Activated naive CD4-positive, alpha-beta T cell treated with anti-CD3 and anti-CD28 coated beads, Interleukin-2, amount 10 ng/mL, durations not matched to agents 7 days and 5 days (primary cell): ENCODE measurements at regions of chr20 and their contacts with region 1.

Region 1: GRCh38 chr20:32945710-32946221 is 58.5 kb downstream of the SUN5 start:
- DNase-seq: no peak
- H3K4me3 Mint-ChIP-seq: no peak overlapping the region
- H3K27ac Mint-ChIP-seq: peak overlapping the region; percentile 66
- H3K4me1 Mint-ChIP-seq: peaks cover 37% of the 10 kb centered on the region
- H3K27me3 Mint-ChIP-seq: no peaks in the 10 kb centered on the region

Region 2: DNA sequence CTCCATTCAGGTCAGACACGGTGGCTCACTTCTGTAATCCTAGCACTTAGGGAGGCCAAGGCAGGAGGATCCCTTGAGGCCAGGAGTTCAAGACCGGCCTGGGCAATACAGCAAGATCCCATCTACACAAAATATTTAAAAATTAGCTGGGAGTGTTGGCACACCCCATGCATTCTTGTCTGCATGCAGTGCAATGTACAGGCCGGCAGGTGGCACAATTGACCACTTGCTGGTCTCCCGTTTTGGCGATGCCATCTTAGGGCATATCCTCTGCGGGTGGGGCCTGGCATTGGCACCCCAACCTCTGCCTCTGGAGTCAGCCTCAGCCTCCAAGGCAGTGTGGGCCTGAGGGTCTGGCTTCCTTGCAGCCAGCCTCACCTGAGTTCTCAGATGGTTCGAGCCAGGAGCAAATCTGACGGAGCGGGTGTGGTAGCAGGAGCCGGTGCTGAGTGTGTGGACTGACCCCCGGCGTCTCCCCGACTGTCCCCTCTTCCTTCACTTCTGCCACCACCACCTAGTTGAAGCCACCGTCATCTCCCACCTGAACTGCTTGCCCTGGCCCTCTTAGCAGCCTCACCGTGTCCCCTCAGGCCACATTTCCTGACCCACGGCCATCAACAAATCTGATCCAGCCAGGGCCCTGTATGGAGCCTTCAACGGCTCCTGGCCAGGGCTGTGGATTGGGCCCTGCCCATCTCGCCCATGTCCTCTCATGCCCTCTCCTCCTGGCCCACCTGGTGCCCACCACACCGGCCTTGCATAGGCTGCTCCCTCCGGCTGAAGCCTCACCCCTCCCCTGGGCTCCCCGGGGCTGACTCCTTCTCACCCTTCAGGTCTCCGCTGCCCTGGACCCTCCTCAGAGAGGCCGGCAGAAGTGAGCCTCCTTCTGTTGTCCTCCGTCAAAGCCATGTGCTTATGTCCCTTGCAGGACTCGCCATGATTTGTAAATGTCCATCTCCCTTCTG is 43.0 kb before region 1 on chr20:
- CTCF ChIA-PET with region 1: interaction called, 26 read pairs
- DNase-seq: peak; percentile 78
- H3K4me3 Mint-ChIP-seq: no peak overlapping the region
- H3K27ac Mint-ChIP-seq: no peak overlapping the region
- H3K4me1 Mint-ChIP-seq: peaks cover 12% of the 10 kb centered on the region
- H3K27me3 Mint-ChIP-seq: no peaks in the 10 kb centered on the region

Region 3: DNA sequence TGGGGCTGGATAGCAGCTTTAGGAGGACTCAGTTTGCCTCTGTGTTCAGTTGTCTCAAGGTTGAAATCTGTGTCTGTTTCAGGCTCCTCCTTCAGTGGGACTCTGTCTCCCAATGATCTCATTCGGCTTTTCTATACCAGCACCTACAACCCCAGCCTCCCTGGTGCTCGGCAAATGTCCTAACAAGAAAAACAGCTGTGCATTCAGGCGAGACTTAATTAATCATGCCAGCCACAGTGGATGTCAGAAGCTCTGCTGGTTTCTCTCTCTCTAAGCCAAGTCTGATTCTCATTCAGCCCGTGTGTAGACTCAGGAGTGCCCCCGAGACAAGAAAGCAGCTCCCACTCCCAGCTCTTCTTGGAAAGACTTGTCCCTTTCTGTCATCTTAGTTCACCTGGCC is 11.7 kb after region 1 on chr20:
- CTCF ChIA-PET with region 1: interaction called, 14 read pairs
- DNase-seq: no peak
- H3K4me3 Mint-ChIP-seq: no peak overlapping the region
- H3K27ac Mint-ChIP-seq: no peak overlapping the region
- H3K4me1 Mint-ChIP-seq: no peaks in the 10 kb centered on the region
- H3K27me3 Mint-ChIP-seq: peaks cover 3% of the 10 kb centered on the region

Region 4: GRCh38 chr20:32966881-32967781 is 21.4 kb after region 1 on chr20:
- CTCF ChIA-PET with region 1: interaction called, 24 read pairs
- DNase-seq: peak; percentile 80
- H3K4me3 Mint-ChIP-seq: peak overlapping the region; percentile 42
- H3K27ac Mint-ChIP-seq: no peak overlapping the region
- H3K4me1 Mint-ChIP-seq: peaks cover 19% of the 10 kb centered on the region
- H3K27me3 Mint-ChIP-seq: peaks cover 5% of the 10 kb centered on the region

Region 5: GRCh38 chr20:32972181-32973076 is 26.7 kb after region 1 on chr20:
- CTCF ChIA-PET with region 1: interaction called, 24 read pairs
- DNase-seq: peak; percentile 89
- H3K4me3 Mint-ChIP-seq: peak overlapping the region; percentile 39
- H3K27ac Mint-ChIP-seq: no peak overlapping the region
- H3K4me1 Mint-ChIP-seq: peaks cover 13% of the 10 kb centered on the region
- H3K27me3 Mint-ChIP-seq: no peaks in the 10 kb centered on the region

Region 6: DNA sequence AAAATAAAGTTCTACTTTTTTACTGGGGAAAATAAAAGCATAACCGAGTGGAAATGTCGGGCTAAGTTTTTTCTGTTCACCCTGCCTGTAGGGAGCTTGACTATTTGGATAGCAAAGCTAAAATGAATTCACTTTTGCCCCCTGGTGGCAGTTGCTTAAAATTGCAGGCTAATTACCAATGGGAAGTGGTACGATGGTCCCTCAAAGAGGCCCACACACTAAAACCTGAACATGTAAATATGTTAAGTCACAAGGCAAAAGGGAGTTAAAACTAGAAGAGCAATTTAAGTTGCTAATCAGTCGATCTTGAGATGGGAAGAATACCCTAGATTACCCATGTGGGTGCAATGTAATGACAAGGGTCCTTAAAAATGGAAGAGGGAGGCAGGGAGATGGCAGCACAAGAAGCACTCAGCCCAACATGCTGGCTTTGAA is 59.4 kb after region 1 on chr20:
- CTCF ChIA-PET with region 1: interaction called, 17 read pairs
- DNase-seq: peak; percentile 45
- H3K4me3 Mint-ChIP-seq: no peak overlapping the region
- H3K27ac Mint-ChIP-seq: no peak overlapping the region
- H3K4me1 Mint-ChIP-seq: peaks cover 2% of the 10 kb centered on the region
- H3K27me3 Mint-ChIP-seq: peaks cover 6% of the 10 kb centered on the region